Transverse colon (tissue), 4 donors: ENCODE measurements at regions of chr9 and their contacts with region 1.

Region 1: GRCh38 chr9:70625078-70625477 is 210.6 kb upstream of the KLF9 start:
- DNase-seq: no peak
- H3K4me3 ChIP-seq: no peak overlapping the region
- H3K27ac ChIP-seq: no peak overlapping the region
- H3K4me1 ChIP-seq: no peaks in the 10 kb centered on the region
- H3K27me3 ChIP-seq: no peaks in the 10 kb centered on the region
- CTCF ChIP-seq: no peak
- EP300 ChIP-seq: no peak
- POLR2A ChIP-seq: no peak

Region 2: GRCh38 chr9:69622676-69623075 is 1002.4 kb before region 1 on chr9:
- in situ Hi-C with region 1: no loop called
- intact Hi-C with region 1: no loop called
- DNase-seq: no peak
- H3K4me3 ChIP-seq: no peak overlapping the region
- H3K27ac ChIP-seq: no peak overlapping the region
- H3K4me1 ChIP-seq: no peaks in the 10 kb centered on the region
- H3K27me3 ChIP-seq: no peaks in the 10 kb centered on the region
- CTCF ChIP-seq: no peak
- EP300 ChIP-seq: no peak
- POLR2A ChIP-seq: no peak

Region 3: GRCh38 chr9:70911791-70912190 is 286.7 kb after region 1 on chr9:
- in situ Hi-C with region 1: no loop called
- intact Hi-C with region 1: no loop called
- DNase-seq: no peak
- H3K4me3 ChIP-seq: no peak overlapping the region
- H3K27ac ChIP-seq: no peak overlapping the region
- H3K4me1 ChIP-seq: no peaks in the 10 kb centered on the region
- H3K27me3 ChIP-seq: no peaks in the 10 kb centered on the region
- CTCF ChIP-seq: no peak
- EP300 ChIP-seq: no peak
- POLR2A ChIP-seq: no peak

Region 4: DNA sequence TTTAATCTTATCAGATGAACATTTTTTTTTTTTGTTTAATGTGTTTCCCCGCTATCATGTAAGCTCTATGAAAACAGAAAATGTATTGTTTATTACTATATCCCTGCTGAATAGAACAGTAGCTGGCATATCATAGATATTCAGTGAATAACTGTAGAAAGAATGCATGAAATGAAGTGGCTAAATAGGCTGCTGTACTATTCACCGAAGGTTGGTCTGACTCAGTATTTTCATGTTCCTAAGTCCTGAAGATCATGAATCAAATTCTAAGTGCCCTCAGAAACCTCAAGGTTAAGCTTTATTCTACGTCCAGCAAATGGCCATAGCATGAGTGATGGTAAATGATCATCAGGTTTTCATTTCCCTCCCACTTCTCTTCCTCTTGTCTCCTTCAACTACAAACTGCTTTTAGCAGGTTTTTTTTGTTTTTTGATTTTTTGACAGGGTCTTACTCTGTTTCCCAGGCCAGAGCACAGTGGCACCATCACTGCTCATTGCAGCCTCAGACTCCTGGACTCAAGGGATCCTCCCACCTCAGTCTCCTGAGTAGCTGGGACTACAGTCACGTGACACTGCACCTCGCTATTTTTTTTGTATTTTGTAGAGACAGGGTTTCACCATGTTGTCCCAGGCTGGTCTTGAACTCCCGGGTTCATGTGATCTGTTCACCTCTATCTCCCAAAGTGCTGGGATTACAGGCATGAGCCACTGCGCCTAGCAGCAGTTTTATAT is 1759.1 kb after region 1 on chr9:
- in situ Hi-C with region 1: no loop called
- intact Hi-C with region 1: loop called (anchors 5 kb)
- DNase-seq: no peak
- H3K4me3 ChIP-seq: no peak overlapping the region
- H3K27ac ChIP-seq: no peak overlapping the region
- H3K4me1 ChIP-seq: no peaks in the 10 kb centered on the region
- H3K27me3 ChIP-seq: no peaks in the 10 kb centered on the region
- CTCF ChIP-seq: no peak
- EP300 ChIP-seq: no peak
- POLR2A ChIP-seq: no peak